ENCODE measurements at regions of chr19 and their contacts with region 1.

Region 1: DNA sequence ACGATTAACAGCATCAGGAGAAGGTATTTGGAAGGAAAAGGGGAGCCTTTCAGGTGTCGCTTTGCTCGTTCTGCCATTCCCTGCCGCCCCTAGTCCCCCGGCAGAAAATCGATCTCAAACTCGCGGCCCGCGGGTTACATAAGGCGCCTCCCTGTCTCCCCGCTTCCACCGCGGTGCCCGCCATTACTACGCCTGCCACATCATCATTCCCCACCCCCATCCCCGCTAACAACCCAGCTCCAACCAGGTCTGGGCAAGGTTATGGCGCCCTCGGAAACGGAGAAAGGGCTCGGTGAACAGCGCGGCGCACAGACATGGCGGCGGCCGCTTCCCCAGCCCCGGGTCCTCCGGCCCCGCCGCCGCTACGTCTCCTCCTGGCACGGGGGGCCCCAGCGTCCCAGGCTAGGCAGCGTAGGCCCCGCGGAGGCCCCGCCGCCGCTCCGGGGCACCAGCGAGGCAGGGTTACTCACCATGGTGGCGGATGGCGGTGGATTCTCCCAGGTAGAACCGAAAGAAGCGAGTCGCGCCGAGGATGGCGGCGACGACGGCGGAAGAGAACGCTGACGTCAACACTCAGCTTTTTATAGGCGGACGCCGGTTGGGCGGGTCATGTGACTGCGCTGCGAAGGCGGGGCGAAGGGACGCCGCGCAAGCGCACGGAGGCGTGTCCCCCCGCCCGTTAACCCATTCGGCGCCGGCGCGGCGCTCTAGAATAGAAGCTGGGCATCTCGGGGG is at the start of gene EEF2:
- DNase-seq: peak; percentile 96
- ATAC-seq: peak; percentile 84
- total RNA-seq, gene EEF2: 1,381 TPM

Region 2: DNA sequence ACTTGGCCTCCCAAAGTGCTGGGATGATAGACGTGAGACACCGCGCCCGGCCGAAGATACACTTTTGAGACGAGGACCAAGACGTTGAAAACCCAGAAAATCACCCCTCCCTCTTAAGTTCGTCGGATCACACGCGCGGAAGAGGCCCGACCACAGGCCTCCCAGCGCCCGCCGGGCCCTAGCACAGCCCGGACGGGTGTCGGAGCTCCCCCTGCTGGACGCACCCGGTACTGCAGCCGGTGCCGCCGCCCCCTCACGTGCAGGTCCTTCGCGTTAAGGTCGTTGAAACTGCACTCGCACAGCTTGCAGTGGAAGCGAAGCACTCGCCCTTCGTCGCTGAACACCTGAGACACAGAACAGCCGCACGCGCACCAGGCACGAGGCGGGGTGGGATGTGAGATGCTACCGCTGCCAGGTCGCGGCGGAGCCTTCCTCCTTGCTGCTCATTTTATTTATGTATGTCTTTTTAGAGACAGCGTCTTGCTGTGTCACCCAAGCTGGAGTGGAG is 163.2 kb before region 1 on chr19:
- intact Hi-C with region 1: no loop called
- DNase-seq: peak; percentile 72
- ATAC-seq: peak; percentile 61

Region 3: GRCh38 chr19:4035582-4035981 is 50.5 kb after region 1 on chr19:
- intact Hi-C with region 1: no loop called
- DNase-seq: no peak
- ATAC-seq: no peak

Region 4: DNA sequence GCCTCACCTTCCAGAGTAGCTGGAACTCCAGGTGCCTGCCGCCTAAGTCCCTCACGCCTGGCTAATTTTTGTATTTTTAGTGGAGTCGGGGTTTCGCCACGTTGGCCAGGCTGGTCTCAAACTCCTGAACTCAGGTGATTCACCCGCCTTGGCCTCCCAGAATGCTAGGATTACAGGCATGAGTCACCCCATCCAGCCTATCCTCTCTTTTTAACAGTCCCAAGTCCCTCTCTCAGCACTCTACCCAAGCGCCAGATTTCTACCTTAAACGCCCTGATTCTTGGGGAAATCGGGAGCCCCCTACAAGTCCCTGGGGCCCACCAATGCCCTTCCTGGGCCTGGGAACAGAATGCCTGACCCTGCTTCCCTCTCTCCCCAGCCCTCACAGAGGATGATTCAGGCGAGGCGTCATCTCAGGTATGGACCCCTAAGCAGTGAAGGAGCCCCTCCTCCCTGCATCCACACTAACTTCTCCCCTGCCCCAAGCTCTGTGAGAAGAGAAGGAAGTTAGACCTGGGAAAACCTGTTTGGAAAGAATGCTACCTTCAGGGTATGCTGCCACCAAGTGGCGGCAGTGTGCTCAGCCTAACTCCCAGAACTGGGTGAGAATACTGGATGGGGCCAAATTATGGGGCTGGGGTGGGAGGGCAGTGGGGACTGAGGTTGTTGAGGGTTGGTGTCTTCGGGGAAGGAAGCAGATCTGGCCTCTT is 223.5 kb after region 1 on chr19:
- intact Hi-C with region 1: loop called (anchors 10 kb)
- DNase-seq: no peak
- ATAC-seq: no peak

Measured in sciatic nerve (tissue), 2 donors.